ENCODE measurements at regions of chr1 and their contacts with region 1.

Region 1: GRCh38 chr1:145918144-145918992 is at the start of gene PEX11B:
- DNase-seq: peak; percentile 92 to 94
- H3K4me3 ChIP-seq: peak within 1 kb of the TSS; percentile 94 to 99
- H3K27ac ChIP-seq: peak within 1 kb of the TSS; percentile 88 to 93
- H3K4me1 ChIP-seq: peaks cover 0 to 26% (median 22%) of the 10 kb centered on the region in 4 donors
- H3K27me3 ChIP-seq: no peaks in the 10 kb centered on the region
- CTCF ChIP-seq: peak in 1 of 2 experiments; percentile 27

Region 2: DNA sequence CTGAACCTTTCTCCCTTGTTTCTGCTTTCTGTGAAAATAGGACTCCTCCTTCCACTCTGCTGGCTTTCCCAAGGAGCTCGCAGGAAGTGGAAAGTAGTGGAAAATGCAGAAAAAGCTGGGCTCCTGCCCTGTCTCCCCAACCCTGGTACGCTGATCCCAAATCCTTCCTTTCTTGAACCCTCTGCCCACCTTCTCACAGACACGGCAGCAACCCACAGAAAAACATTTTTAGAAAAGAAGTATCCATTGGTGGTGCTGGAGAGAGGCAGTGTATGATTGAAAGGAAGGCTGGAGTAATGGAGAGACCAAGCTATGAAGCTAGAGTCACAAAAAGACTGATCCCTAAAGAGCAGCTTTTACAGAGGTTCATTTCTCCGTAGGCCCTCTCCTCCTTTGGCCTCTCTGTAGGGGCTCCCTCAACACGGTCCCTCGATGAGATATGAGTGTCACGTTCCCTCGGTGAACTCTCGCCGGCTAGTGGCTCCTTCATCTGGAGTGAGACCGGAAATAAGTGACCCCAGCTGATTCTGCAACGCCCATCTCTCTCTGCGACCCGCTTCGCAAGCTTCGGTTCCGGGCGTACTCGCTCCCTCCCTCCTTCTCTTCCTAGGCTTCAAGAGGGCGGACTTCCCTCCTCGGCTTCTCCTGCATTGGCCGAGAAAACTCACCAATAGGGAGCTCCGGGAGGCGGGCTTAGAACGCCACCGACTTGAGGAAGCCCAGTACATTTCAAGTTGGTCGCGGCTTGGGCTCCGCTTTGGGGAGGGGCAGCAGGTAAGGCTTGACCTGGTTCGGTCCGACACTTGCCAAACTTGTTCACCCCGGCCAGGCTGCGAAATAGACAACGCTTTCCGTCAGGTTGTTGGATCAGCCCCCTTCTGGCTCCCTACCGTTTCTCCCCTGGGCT is 45.9 kb after region 1 on chr1 and contains the starts of genes ANKRD34A and POLR3GL:
- intact Hi-C with region 1: loop called (anchors 10 kb)
- DNase-seq: peak; percentile 98
- H3K4me3 ChIP-seq: peak within 1 kb of the TSS; percentile 59 to 75
- H3K27ac ChIP-seq: peak within 1 kb of the TSS; percentile 84 to 96
- H3K4me1 ChIP-seq: peaks cover 5 to 44% (median 37%) of the 10 kb centered on the region in 4 donors
- H3K27me3 ChIP-seq: no peaks in the 10 kb centered on the region
- CTCF ChIP-seq: no peak

Region 3: DNA sequence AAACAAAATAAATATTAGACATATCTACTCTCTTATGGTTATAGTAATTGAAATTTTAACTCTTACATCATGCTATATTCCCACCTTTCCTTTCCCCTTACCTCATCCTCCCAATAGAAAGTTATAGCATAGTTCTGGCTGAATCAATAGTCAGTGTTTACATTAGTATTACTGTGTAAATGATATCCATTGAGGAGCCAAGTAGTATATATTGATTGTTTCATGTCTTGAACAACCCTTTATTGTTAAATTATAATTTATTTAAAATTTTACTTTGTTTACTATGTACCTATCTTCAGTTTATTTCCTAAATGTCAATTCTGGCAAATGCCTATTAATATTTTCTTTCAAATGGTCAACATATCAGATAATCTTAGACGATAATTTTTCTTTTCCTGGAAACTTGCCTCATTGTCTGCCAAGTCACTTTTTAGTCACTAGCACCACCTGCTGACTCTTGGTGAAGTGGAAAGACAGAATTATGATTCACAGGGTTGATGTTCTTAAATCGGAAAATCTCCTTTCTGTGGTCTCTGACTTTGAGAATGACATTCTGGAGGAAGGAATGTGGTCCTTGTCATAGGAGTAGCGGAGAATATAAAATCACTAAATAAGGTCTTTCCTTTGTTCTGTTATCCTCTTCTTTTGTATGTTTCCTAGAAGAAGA is 94.5 kb after region 1 on chr1:
- intact Hi-C with region 1: loop called (anchors 5 kb)
- DNase-seq: peak in 1 of 2 donors; percentile 55
- H3K4me3 ChIP-seq: no peak overlapping the region
- H3K27ac ChIP-seq: no peak overlapping the region
- H3K4me1 ChIP-seq: peaks cover 0 to 4% (median 0%) of the 10 kb centered on the region in 4 donors
- H3K27me3 ChIP-seq: no peaks in the 10 kb centered on the region
- CTCF ChIP-seq: peak; percentile 72 to 75